CD8-positive, alpha-beta T cell (primary cell): ENCODE measurements at regions of chr7 and their contacts with region 1.

Region 1: GRCh38 chr7:87933945-87934698 is at the start of gene ADAM22:
- DNase-seq: peak; percentile 65 to 94 (median 85)
- ATAC-seq: peak; percentile 94
- H3K4me3 ChIP-seq: peak within 1 kb of the TSS; percentile 73 to 82
- H3K4me3 Mint-ChIP-seq: peak within 1 kb of the TSS; percentile 89
- H3K27ac ChIP-seq: peak within 1 kb of the TSS; percentile 32 to 71
- H3K27ac Mint-ChIP-seq: peak within 1 kb of the TSS; percentile 79
- H3K4me1 ChIP-seq: peaks cover 7% of the 10 kb centered on the region
- H3K4me1 Mint-ChIP-seq: peaks cover 11% of the 10 kb centered on the region
- H3K27me3 ChIP-seq: no peaks in the 10 kb centered on the region
- H3K27me3 Mint-ChIP-seq: no peaks in the 10 kb centered on the region
- CTCF ChIP-seq: no peak
- total RNA-seq, gene ADAM22: 1.1 to 1.7 TPM

Region 2: GRCh38 chr7:88219781-88220747 is 285.9 kb after region 1 on chr7 and contains the start of gene SRI:
- CTCF ChIA-PET with region 1: interaction called, 3 read pairs
- POLR2A ChIA-PET with region 1: no interaction called
- intact Hi-C with region 1: loop called (anchors 1 to 5 kb)
- DNase-seq: peak; percentile 87 to 95 (median 92)
- ATAC-seq: peak; percentile 97
- H3K4me3 ChIP-seq: peak within 1 kb of the TSS; percentile 81 to 86
- H3K4me3 Mint-ChIP-seq: peak within 1 kb of the TSS; percentile 95
- H3K27ac ChIP-seq: peak within 1 kb of the TSS; percentile 73 to 83
- H3K27ac Mint-ChIP-seq: peak within 1 kb of the TSS; percentile 97
- H3K4me1 ChIP-seq: peaks cover 21% of the 10 kb centered on the region
- H3K4me1 Mint-ChIP-seq: peaks cover 34% of the 10 kb centered on the region
- H3K27me3 ChIP-seq: no peaks in the 10 kb centered on the region
- H3K27me3 Mint-ChIP-seq: no peaks in the 10 kb centered on the region
- CTCF ChIP-seq: peak; percentile 97
- total RNA-seq, gene SRI: 38.5 to 43.9 TPM

Region 3: DNA sequence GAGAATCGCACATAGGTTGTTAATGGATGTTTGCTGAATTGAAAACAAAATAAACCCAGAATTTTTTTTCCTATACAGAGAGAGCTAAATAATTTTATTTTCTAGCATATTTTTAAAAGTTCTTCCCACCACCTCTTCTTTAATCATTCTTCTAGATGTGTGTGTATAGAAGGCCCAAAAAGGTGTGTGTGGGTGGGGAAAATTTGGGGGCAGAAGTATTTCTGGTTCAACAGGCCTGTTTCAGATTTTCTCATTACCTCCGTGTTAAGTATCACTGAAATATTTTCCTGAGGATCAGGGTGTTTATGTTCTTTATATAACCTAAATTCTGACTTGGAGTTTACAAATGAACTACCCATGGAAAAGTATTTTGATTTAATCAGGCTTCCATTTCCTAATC is 681.2 kb after region 1 on chr7:
- CTCF ChIA-PET with region 1: no interaction called
- POLR2A ChIA-PET with region 1: no interaction called
- intact Hi-C with region 1: no loop called
- DNase-seq: no peak
- ATAC-seq: no peak
- H3K4me3 ChIP-seq: no peak overlapping the region
- H3K4me3 Mint-ChIP-seq: no peak overlapping the region
- H3K27ac ChIP-seq: no peak overlapping the region
- H3K27ac Mint-ChIP-seq: no peak overlapping the region
- H3K4me1 ChIP-seq: no peaks in the 10 kb centered on the region
- H3K4me1 Mint-ChIP-seq: no peaks in the 10 kb centered on the region
- H3K27me3 ChIP-seq: no peaks in the 10 kb centered on the region
- H3K27me3 Mint-ChIP-seq: no peaks in the 10 kb centered on the region
- CTCF ChIP-seq: no peak